PC-9 (cell line): ENCODE measurements at regions of chr10 and their contacts with region 1.

Region 1: GRCh38 chr10:98045785-98046389 is 15.5 kb upstream of the CRTAC1 start:
- DNase-seq: peak in 1 of 2 experiments; percentile 34
- H3K4me3 ChIP-seq: no peak overlapping the region
- H3K27ac ChIP-seq: no peak overlapping the region
- H3K4me1 ChIP-seq: no peaks in the 10 kb centered on the region
- H3K27me3 ChIP-seq: peaks cover 30% of the 10 kb centered on the region; the same call in 1 of the 2 replicates
- CTCF ChIP-seq: peak; percentile 82

Region 2: DNA sequence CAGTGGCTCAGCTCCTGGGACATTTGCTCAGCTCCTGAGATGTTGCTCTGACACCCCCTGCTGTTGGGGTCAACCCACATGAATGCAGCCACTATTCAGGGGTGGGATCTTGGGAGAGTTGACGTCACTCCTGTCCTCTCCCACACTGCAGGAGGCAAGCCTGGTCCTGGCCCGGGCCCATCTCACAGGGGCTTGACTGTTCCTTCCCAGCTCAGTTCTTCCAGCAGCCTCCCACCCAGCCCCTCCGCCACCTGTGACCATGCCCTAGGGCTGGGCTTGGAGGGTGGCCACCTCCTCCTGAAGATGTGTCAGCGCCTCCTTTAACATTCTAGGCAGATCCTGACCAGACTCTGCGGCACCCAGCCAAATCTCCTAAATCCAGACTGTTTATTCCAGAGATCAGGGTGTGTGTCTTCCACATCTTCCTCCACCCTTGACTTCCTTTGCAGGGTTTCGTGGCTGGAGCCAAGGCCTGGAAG is 1668.0 kb before region 1 on chr10:
- CTCF ChIA-PET with region 1: no interaction called
- POLR2A ChIA-PET with region 1: no interaction called
- intact Hi-C with region 1: no loop called
- DNase-seq: no peak
- H3K4me3 ChIP-seq: no peak overlapping the region
- H3K27ac ChIP-seq: no peak overlapping the region
- H3K4me1 ChIP-seq: peaks cover 7% of the 10 kb centered on the region
- H3K27me3 ChIP-seq: no peaks in the 10 kb centered on the region
- CTCF ChIP-seq: no peak

Region 3: DNA sequence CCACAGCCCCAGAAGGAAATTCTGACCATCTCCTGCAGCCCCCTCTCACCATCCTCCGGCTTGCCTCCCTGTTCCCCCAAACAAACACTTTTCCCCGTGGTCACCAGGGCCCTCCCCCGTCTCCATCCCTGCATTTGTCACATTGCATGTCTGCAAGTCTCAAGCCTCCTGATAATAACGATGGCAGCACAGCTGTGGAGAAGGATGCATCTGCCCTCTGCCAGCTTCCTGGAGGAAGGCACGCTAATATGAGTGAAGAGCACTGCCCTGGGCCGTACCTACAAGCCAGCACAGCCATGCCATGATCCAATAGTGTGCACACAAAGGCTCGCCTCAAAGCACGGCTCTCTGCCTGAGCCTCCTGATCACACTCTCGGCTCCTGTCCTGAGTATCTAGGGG is 958.6 kb before region 1 on chr10:
- CTCF ChIA-PET with region 1: interaction called, 11 read pairs
- POLR2A ChIA-PET with region 1: no interaction called
- intact Hi-C with region 1: no loop called
- DNase-seq: no peak
- H3K4me3 ChIP-seq: no peak overlapping the region
- H3K27ac ChIP-seq: no peak overlapping the region
- H3K4me1 ChIP-seq: no peaks in the 10 kb centered on the region
- H3K27me3 ChIP-seq: peaks cover 34% of the 10 kb centered on the region
- CTCF ChIP-seq: no peak

Region 4: DNA sequence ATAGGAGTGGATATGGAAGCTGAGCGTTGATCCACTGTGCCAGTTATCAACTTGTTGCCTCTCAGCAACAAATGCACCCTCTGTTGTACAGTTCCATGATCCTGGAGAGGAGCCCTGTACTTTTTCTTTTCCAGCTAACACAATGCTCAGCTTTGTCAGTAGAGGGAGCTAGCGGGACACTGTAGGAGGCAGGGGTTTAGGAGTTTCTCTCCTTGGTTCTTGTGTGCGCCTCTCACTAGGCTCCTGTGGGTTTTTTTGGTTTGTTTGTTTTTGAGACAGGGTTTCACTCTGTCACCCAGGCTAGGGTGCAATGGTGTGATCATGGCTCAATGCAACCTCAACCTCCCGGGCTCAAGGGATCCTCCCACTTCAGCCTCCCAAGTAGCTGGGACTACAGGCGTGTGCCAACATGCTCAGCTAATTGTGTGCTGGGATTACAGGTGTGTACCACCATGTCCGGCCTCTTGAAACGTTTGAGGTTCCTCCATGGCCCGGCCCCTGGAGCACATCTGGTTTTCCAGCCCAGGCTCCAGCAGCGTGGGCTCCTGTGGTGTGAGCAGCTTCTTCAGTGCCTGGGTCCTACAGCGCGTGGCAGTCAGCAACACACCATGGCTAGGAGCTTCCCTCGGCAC is 344.3 kb before region 1 on chr10:
- CTCF ChIA-PET with region 1: no interaction called
- POLR2A ChIA-PET with region 1: no interaction called
- intact Hi-C with region 1: loop called (anchors 5 kb)
- DNase-seq: peak in 1 of 2 experiments; percentile 29
- H3K4me3 ChIP-seq: no peak overlapping the region
- H3K27ac ChIP-seq: no peak overlapping the region
- H3K4me1 ChIP-seq: no peaks in the 10 kb centered on the region
- H3K27me3 ChIP-seq: no peaks in the 10 kb centered on the region
- CTCF ChIP-seq: peak; percentile 74

Region 5: GRCh38 chr10:97759158-97759887 is 286.6 kb before region 1 on chr10:
- CTCF ChIA-PET with region 1: no interaction called
- POLR2A ChIA-PET with region 1: no interaction called
- intact Hi-C with region 1: loop called (anchors 1 kb)
- DNase-seq: peak; percentile 36 to 48
- H3K4me3 ChIP-seq: no peak overlapping the region
- H3K27ac ChIP-seq: no peak overlapping the region
- H3K4me1 ChIP-seq: no peaks in the 10 kb centered on the region
- H3K27me3 ChIP-seq: no peaks in the 10 kb centered on the region
- CTCF ChIP-seq: peak; percentile 78

Region 6: DNA sequence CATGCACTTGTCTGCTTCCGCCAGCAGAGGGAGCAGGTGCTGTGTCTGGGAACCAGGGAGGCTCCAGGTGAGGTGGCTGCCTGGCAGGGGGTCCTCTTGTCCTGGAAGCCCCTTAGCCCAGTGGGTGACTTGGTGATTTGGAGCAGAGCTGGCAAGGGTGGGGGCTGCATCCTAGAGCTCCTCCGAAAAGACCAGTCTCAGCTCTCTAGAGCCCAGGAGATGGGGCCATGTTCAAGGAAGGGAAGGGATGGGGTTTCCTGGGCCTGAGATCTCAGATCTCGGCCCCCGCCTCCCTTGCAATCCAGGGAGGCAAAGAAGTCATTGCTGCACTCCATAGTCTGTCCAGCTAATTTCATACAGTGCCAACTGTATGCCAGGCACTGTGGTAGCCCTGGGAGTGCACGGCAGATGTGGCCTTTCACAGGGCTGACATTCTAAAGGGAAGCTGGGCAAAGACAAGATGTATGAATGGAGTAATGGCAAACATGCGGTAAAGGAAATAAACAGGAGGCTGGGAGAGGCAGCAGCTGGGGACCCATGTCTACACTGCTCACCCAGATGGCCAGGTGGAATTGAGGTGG is 253.7 kb before region 1 on chr10:
- CTCF ChIA-PET with region 1: no interaction called
- POLR2A ChIA-PET with region 1: no interaction called
- intact Hi-C with region 1: loop called (anchors 10 kb)
- DNase-seq: peak in 1 of 2 experiments; percentile 53
- H3K4me3 ChIP-seq: no peak overlapping the region
- H3K27ac ChIP-seq: no peak overlapping the region
- H3K4me1 ChIP-seq: no peaks in the 10 kb centered on the region
- H3K27me3 ChIP-seq: no peaks in the 10 kb centered on the region
- CTCF ChIP-seq: peak; percentile 90

Region 7: GRCh38 chr10:97914837-97915211 is 131.1 kb before region 1 on chr10:
- CTCF ChIA-PET with region 1: interaction called, 3 read pairs
- POLR2A ChIA-PET with region 1: no interaction called
- intact Hi-C with region 1: loop called (anchors 1 kb)
- DNase-seq: peak; percentile 35 to 63
- H3K4me3 ChIP-seq: no peak overlapping the region
- H3K27ac ChIP-seq: no peak overlapping the region
- H3K4me1 ChIP-seq: no peaks in the 10 kb centered on the region
- H3K27me3 ChIP-seq: peaks cover 10% of the 10 kb centered on the region
- CTCF ChIP-seq: peak; percentile 85